ENCODE measurements at regions of chr11 and their contacts with region 1.

Region 1: DNA sequence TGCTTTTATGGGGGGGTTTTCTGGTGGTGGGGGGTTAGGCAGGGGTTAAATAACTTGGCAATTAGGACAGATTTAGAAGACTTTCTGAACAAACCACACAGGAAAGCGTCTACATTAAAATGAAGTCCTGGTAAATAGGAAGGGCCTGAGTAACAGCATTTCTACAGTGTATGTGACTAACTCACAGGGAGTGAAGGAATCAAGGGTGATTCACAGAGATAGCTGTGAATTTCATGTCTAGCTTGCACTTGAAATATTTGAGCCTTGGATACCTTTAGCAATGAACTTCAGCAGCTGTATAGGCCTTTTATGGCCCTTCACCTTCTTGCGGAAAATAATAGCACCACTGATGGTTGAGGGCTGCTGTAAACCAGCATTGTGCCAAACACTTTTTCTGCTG is 26.1 kb upstream of the LDHA start:
- DNase-seq: no peak
- ATAC-seq: no peak
- H3K4me3 ChIP-seq: no peak overlapping the region
- H3K4me3 Mint-ChIP-seq: no peak overlapping the region
- H3K27ac ChIP-seq: no peak overlapping the region
- H3K27ac Mint-ChIP-seq: peak overlapping the region in 7 of 9 donors; percentile 0 to 82 (median 63)
- H3K4me1 ChIP-seq: no peaks in the 10 kb centered on the region
- H3K4me1 Mint-ChIP-seq: peaks cover 0 to 22% (median 6%) of the 10 kb centered on the region in 7 donors
- H3K27me3 ChIP-seq: no peaks in the 10 kb centered on the region
- H3K27me3 Mint-ChIP-seq: no peaks in the 10 kb centered on the region

Region 2: DNA sequence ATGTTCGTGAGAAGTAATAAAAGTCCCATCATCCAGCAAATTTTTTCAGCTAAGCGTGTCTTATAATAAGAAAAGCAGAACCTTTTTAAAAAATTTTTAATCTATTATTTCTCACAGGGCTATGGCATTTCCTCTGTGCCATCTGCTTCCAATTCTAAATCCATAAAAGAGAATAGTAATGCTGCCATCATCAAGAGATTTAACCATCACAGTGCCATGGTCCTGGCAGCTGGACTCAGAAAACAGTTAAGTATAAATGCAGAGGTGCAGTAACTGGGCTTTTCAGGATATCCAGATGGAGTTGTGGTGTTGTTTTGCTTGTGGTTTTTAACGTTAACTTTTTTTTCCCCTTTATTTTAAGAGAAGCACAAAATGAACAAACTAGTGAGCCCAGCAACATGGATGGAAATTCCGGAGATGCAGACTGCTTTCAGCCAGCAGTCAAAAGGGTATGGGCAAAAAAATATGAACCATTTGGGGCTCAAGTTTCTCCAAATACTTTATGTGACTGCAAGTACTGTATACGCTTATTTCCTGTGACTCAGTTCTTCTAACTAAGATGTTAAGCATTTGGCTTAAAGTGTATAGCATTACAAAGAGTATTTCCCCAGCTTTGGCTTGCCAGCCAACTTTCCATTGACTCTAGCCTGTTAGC is 20.6 kb before region 1 on chr11:
- CTCF ChIA-PET with region 1: interaction called, 4 read pairs
- POLR2A ChIA-PET with region 1: no interaction called
- intact Hi-C with region 1: loop called in 1 of 2 experiments (anchors 2 kb)
- DNase-seq: no peak
- ATAC-seq: no peak
- H3K4me3 ChIP-seq: no peak overlapping the region
- H3K4me3 Mint-ChIP-seq: no peak overlapping the region
- H3K27ac ChIP-seq: no peak overlapping the region
- H3K27ac Mint-ChIP-seq: peak overlapping the region in 3 of 9 donors; percentile 34 to 86 (median 52)
- H3K4me1 ChIP-seq: no peaks in the 10 kb centered on the region
- H3K4me1 Mint-ChIP-seq: peaks cover 0 to 5% (median 2%) of the 10 kb centered on the region in 7 donors
- H3K27me3 ChIP-seq: no peaks in the 10 kb centered on the region
- H3K27me3 Mint-ChIP-seq: no peaks in the 10 kb centered on the region

Region 3: GRCh38 chr11:18383388-18384156 is 15.4 kb after region 1 on chr11:
- CTCF ChIA-PET with region 1: interaction called, 5 read pairs
- POLR2A ChIA-PET with region 1: interaction called, 5 read pairs
- intact Hi-C with region 1: loop called in 1 of 2 experiments (anchors 2 kb)
- DNase-seq: peak; percentile 15 to 74 (median 70)
- ATAC-seq: peak; percentile 87
- H3K4me3 ChIP-seq: peak overlapping the region; percentile 49
- H3K4me3 Mint-ChIP-seq: peak overlapping the region; percentile 70 to 83 (median 80)
- H3K27ac ChIP-seq: peak overlapping the region; percentile 85
- H3K27ac Mint-ChIP-seq: peak overlapping the region; percentile 92 to 100 (median 98)
- H3K4me1 ChIP-seq: peaks cover 20 to 21% of the 10 kb centered on the region in 2 donors
- H3K4me1 Mint-ChIP-seq: peaks cover 29 to 53% (median 45%) of the 10 kb centered on the region in 7 donors
- H3K27me3 ChIP-seq: no peaks in the 10 kb centered on the region
- H3K27me3 Mint-ChIP-seq: no peaks in the 10 kb centered on the region

Region 4: GRCh38 chr11:18588297-18589252 is 220.4 kb after region 1 on chr11 and contains the start of gene UEVLD:
- CTCF ChIA-PET with region 1: no interaction called
- POLR2A ChIA-PET with region 1: no interaction called
- intact Hi-C with region 1: no loop called
- DNase-seq: peak; percentile 18 to 82 (median 23)
- ATAC-seq: peak; percentile 62
- H3K4me3 ChIP-seq: peak within 1 kb of the TSS; percentile 63
- H3K4me3 Mint-ChIP-seq: no peak within 1 kb of the TSS
- H3K27ac ChIP-seq: peak within 1 kb of the TSS; percentile 68
- H3K27ac Mint-ChIP-seq: no peak within 1 kb of the TSS
- H3K4me1 ChIP-seq: peaks cover 8 to 15% of the 10 kb centered on the region in 2 donors
- H3K4me1 Mint-ChIP-seq: peaks cover 0 to 19% (median 0%) of the 10 kb centered on the region in 7 donors
- H3K27me3 ChIP-seq: no peaks in the 10 kb centered on the region
- H3K27me3 Mint-ChIP-seq: no peaks in the 10 kb centered on the region
- total RNA-seq, gene UEVLD: 3.6 to 19.8 (median 5.8) TPM